Activated T-helper 1 cell treated with anti-CD3 and anti-CD28 coated beads, Interleukin-12 subunit alpha, Interleukin-12 subunit beta, Interleukin-2, Interleukin-4 antibody, amounts not matched to agents 30 ng/mL and 10 ng/mL and 1 ng/mL, durations not matched to agents 14 hours and 24 hours and 36 hours (primary cell): ENCODE measurements at regions of chr22 and their contacts with region 1.

Region 1: GRCh38 chr22:31345331-31346254 is 553 bp downstream of the PATZ1 start:
- DNase-seq: peak; percentile 85
- H3K4me3 Mint-ChIP-seq: peak overlapping the region; percentile 87
- H3K27ac Mint-ChIP-seq: peak overlapping the region; percentile 89
- H3K4me1 Mint-ChIP-seq: peaks cover 48% of the 10 kb centered on the region
- H3K27me3 Mint-ChIP-seq: no peaks in the 10 kb centered on the region

Region 2: DNA sequence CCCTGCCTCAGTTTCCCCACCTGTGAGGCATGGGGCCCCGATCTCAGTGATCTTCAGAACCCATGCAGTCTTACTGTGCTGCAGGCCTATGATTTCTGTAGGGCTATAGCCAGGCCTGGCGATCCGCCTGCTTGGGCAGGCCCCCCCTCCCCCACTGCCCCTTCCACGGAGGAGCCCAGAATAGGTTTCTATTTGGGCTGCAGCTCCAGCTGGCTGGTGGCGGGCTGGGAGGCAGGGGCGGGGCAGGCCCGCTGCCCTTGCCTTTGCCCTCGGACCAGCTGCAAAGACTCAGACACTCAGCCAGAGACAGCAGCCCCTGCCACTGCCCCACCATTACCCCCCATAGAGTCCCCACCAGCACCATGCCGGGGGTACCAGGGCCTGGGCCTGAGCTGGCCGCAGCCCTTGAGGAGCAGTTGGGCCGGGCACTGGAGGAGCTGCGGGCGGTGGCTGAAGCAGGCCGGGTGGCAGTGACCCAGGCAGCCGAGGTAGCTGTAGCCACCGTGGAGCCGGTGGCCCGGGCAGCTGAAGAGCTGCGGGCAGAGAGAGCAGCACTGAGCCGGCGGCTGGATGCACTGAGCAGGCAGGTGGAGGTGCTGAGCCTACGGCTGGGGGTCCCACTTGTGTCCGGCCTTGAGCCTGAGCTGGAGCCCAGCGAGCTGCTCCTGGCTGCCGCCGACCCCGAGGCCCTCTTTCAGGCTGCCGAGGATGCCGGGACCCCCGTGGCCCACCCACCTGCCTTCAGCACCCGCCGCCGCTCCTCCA is 252.3 kb before region 1 on chr22:
- intact Hi-C with region 1: no loop called
- DNase-seq: no peak
- H3K4me3 Mint-ChIP-seq: no peak overlapping the region
- H3K27ac Mint-ChIP-seq: no peak overlapping the region
- H3K4me1 Mint-ChIP-seq: no peaks in the 10 kb centered on the region
- H3K27me3 Mint-ChIP-seq: no peaks in the 10 kb centered on the region

Region 3: DNA sequence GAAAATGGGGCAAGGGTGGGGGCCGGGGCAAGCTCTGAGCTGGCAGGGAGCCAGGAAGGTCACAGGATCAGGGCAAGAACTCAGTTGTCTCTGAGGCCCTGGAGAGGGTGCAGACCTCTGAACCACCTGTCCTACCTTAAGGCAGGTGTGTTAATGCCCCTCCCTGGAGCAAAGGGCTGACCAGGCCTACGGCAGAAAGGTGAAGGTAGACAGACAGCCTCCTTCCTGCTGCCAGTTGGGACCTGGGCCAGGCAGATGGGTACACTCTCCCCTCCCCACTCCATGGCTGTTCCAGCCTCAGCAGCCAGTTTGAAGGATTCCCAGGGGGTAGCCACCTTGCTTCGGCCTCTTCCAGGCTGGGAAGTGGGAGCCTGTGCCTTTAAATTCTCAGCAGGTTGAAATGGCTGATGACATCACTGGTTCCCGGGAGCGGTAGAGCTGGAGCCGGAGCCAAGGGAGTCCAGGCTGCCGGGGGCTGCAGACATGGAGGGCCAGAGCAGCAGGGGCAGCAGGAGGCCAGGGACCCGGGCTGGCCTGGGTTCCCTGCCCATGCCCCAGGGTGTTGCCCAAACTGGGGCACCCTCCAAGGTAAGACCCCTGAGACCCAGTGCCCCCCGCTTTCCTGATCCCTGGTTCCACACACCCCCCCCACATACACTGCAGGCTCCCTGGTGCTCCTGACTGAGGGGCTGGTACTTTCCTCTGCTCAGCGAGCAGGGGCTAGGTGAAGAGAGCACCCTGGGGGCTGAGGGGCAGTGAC is 222.9 kb before region 1 on chr22 and contains the start of gene INPP5J:
- intact Hi-C with region 1: no loop called
- DNase-seq: no peak
- H3K4me3 Mint-ChIP-seq: no peak within 1 kb of the TSS
- H3K27ac Mint-ChIP-seq: peak within 1 kb of the TSS; percentile 19
- H3K4me1 Mint-ChIP-seq: no peaks in the 10 kb centered on the region
- H3K27me3 Mint-ChIP-seq: peaks cover 1% of the 10 kb centered on the region
- total RNA-seq, gene INPP5J: 0.17 TPM in 1 of 2 replicates, not detected in the other

Region 4: GRCh38 chr22:31160328-31160978 is 185.1 kb before region 1 on chr22:
- intact Hi-C with region 1: loop called (anchors 5 kb)
- DNase-seq: peak; percentile 9
- H3K4me3 Mint-ChIP-seq: peak overlapping the region; percentile 100
- H3K27ac Mint-ChIP-seq: peak overlapping the region; percentile 95
- H3K4me1 Mint-ChIP-seq: peaks cover 42% of the 10 kb centered on the region
- H3K27me3 Mint-ChIP-seq: peaks cover 15% of the 10 kb centered on the region

Region 5: GRCh38 chr22:31367426-31367825 is 21.8 kb after region 1 on chr22:
- intact Hi-C with region 1: no loop called
- DNase-seq: no peak
- H3K4me3 Mint-ChIP-seq: no peak overlapping the region
- H3K27ac Mint-ChIP-seq: no peak overlapping the region
- H3K4me1 Mint-ChIP-seq: peaks cover 5% of the 10 kb centered on the region
- H3K27me3 Mint-ChIP-seq: peaks cover 1% of the 10 kb centered on the region

Region 6: GRCh38 chr22:31399211-31400028 is 53.8 kb after region 1 on chr22 and contains the start of gene DRG1:
- intact Hi-C with region 1: loop called (anchors 1 kb)
- DNase-seq: peak; percentile 97
- H3K4me3 Mint-ChIP-seq: peak within 1 kb of the TSS; percentile 100
- H3K27ac Mint-ChIP-seq: peak within 1 kb of the TSS; percentile 93
- H3K4me1 Mint-ChIP-seq: peaks cover 13% of the 10 kb centered on the region
- H3K27me3 Mint-ChIP-seq: peaks cover 2% of the 10 kb centered on the region
- total RNA-seq, gene DRG1: 113 and 125 TPM in 2 replicates